SK-N-SH (cell line): ENCODE measurements at regions of chr2 and their contacts with region 1.

Region 1: GRCh38 chr2:9984217-9984739 is 32.8 kb downstream of the GRHL1 start:
- DNase-seq: peak; percentile 78
- H3K4me3 ChIP-seq: no peak overlapping the region
- H3K27ac ChIP-seq: no peak overlapping the region
- H3K4me1 ChIP-seq: peaks cover 22 to 25% of the 10 kb centered on the region in 2 experiments
- H3K27me3 ChIP-seq: no peaks in the 10 kb centered on the region
- CTCF ChIP-seq: peak; percentile 93
- EP300 ChIP-seq: no peak
- RAD21 ChIP-seq: peak; percentile 89

Region 2: GRCh38 chr2:9799665-9800632 is 184.3 kb before region 1 on chr2:
- CTCF ChIA-PET with region 1: interaction called, 25 read pairs
- POLR2A ChIA-PET with region 1: no interaction called
- DNase-seq: peak; percentile 98
- H3K4me3 ChIP-seq: no peak overlapping the region; a peak in 1 of 4 replicates
- H3K27ac ChIP-seq: no peak overlapping the region
- H3K4me1 ChIP-seq: peaks cover 8 to 15% of the 10 kb centered on the region in 2 experiments; a peak in 3 of 4 replicates
- H3K27me3 ChIP-seq: no peaks in the 10 kb centered on the region
- CTCF ChIP-seq: peak; percentile 99
- EP300 ChIP-seq: no peak
- RAD21 ChIP-seq: peak; percentile 96

Region 3: GRCh38 chr2:9951272-9951972 is 32.9 kb before region 1 on chr2 and contains the start of gene GRHL1:
- CTCF ChIA-PET with region 1: interaction called, 23 read pairs
- POLR2A ChIA-PET with region 1: no interaction called
- DNase-seq: peak; percentile 100
- H3K4me3 ChIP-seq: peak within 1 kb of the TSS; percentile 71
- H3K27ac ChIP-seq: no peak within 1 kb of the TSS
- H3K4me1 ChIP-seq: peaks cover 0 to 7% of the 10 kb centered on the region in 2 experiments; a peak in 2 of 4 replicates
- H3K27me3 ChIP-seq: no peaks in the 10 kb centered on the region
- CTCF ChIP-seq: no peak
- EP300 ChIP-seq: no peak
- RAD21 ChIP-seq: no peak
- polyA plus RNA-seq, gene GRHL1: 1.0 and 1.6 TPM in 2 replicates

Region 4: GRCh38 chr2:10009811-10010292 is 25.6 kb after region 1 on chr2:
- CTCF ChIA-PET with region 1: interaction called, 58 read pairs
- POLR2A ChIA-PET with region 1: no interaction called
- DNase-seq: peak; percentile 70
- H3K4me3 ChIP-seq: no peak overlapping the region
- H3K27ac ChIP-seq: peak overlapping the region in 1 of 2 experiments; percentile 90; a peak in 2 of 4 replicates
- H3K4me1 ChIP-seq: peaks cover 6 to 52% of the 10 kb centered on the region in 2 experiments; a peak in 2 of 4 replicates
- H3K27me3 ChIP-seq: no peaks in the 10 kb centered on the region
- CTCF ChIP-seq: no peak
- EP300 ChIP-seq: peak in 1 of 2 experiments; percentile 67; a peak in 2 of 4 replicates
- RAD21 ChIP-seq: no peak; the same call in 1 of the 2 replicates

Region 5: GRCh38 chr2:10036095-10036884 is 52.0 kb after region 1 on chr2:
- CTCF ChIA-PET with region 1: interaction called, 76 read pairs
- POLR2A ChIA-PET with region 1: no interaction called
- DNase-seq: peak; percentile 87
- H3K4me3 ChIP-seq: no peak overlapping the region
- H3K27ac ChIP-seq: peak overlapping the region; percentile 24 to 64; a peak in 2 of 4 replicates
- H3K4me1 ChIP-seq: peaks cover 8 to 24% of the 10 kb centered on the region in 2 experiments; a peak in 2 of 4 replicates
- H3K27me3 ChIP-seq: no peaks in the 10 kb centered on the region
- CTCF ChIP-seq: peak; percentile 73
- EP300 ChIP-seq: no peak
- RAD21 ChIP-seq: peak; percentile 50

Region 6: DNA sequence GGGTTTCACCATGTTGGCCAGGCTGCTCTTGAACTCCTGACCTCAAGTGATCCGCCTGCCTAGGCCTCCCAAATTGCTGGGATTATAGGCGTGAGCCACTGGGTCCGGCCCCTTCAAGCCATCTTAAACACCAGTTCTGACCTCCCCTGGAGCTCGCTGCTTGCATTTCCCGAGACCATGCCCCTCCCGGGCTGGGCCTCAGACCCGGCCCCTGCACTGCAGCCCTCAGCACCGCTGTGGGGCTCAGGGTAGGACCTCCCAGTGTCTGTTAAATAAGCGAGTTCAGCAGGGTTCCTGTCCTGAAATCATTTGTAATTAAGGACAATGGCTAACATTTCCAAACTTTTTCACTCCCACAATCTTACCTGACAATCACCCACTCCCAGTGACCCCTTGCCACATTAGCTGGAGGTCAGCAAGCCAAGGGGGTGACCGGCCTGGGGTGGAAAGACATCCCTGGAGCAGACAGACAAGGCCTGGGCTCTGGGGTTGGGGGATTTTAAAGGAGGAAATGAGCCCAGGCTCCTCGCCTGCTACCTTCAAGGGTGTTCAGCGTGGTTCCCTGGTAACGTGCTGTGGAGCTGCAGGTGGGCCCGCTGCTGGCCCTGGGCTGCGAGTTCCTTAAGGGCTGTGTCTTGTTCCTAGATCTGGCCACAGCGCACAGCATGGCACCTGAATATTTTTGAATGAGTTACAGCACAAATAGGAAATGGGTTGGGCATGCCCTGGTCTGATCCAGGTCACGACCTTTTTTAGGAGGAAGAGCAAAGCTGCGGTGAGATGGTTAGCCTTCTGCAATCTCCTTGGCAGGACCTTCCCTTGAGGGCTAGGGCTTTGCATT is 80.9 kb after region 1 on chr2:
- CTCF ChIA-PET with region 1: interaction called, 51 read pairs
- POLR2A ChIA-PET with region 1: no interaction called
- DNase-seq: no peak
- H3K4me3 ChIP-seq: no peak overlapping the region
- H3K27ac ChIP-seq: no peak overlapping the region
- H3K4me1 ChIP-seq: peaks cover 0 to 8% of the 10 kb centered on the region in 2 experiments; a peak in 1 of 4 replicates
- H3K27me3 ChIP-seq: no peaks in the 10 kb centered on the region
- CTCF ChIP-seq: no peak
- EP300 ChIP-seq: no peak
- RAD21 ChIP-seq: no peak

Region 7: DNA sequence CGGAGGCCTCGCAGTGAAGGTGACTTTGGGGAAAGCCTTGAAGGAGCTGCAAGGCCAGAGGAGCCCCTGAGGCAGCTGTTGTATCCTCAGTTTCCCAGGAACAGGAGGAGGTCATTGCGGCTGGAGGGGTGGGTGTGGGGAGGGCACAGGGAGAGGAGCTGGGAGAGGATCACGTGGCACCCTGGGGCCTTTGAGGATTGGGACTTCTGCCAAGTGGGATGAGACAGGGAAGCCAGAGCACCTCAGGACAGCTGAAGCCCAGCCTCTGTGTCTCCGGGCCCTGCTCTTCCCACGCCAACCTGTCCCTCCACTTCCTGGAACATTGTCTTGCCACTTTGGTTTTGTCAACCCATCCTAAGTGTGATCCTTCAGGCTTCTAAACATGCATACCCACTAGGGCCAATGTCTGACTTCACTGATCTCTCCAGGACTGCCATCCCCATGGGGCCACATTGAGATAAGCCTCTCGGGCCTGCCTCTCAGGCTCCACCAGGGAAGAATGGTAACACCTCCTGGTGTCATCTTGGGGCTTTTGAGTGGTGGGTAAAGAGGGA is 119.0 kb after region 1 on chr2:
- CTCF ChIA-PET with region 1: interaction called, 10 read pairs
- POLR2A ChIA-PET with region 1: no interaction called
- DNase-seq: no peak
- H3K4me3 ChIP-seq: no peak overlapping the region
- H3K27ac ChIP-seq: no peak overlapping the region
- H3K4me1 ChIP-seq: no peaks in the 10 kb centered on the region; a peak in 1 of 4 replicates
- H3K27me3 ChIP-seq: no peaks in the 10 kb centered on the region
- CTCF ChIP-seq: no peak
- EP300 ChIP-seq: no peak
- RAD21 ChIP-seq: no peak

Region 8: GRCh38 chr2:10267551-10268465 is 283.5 kb after region 1 on chr2:
- CTCF ChIA-PET with region 1: no interaction called
- POLR2A ChIA-PET with region 1: no interaction called
- DNase-seq: no peak
- H3K4me3 ChIP-seq: no peak overlapping the region
- H3K27ac ChIP-seq: no peak overlapping the region
- H3K4me1 ChIP-seq: peaks cover 4 to 7% of the 10 kb centered on the region in 2 experiments; a peak in 2 of 4 replicates
- H3K27me3 ChIP-seq: no peaks in the 10 kb centered on the region
- CTCF ChIP-seq: no peak
- EP300 ChIP-seq: no peak
- RAD21 ChIP-seq: no peak